Activated CD4-positive, alpha-beta memory T cell treated with anti-CD3 and anti-CD28 coated beads for 36 hours (primary cell): ENCODE measurements at regions of chr9 and their contacts with region 1.

Region 1: DNA sequence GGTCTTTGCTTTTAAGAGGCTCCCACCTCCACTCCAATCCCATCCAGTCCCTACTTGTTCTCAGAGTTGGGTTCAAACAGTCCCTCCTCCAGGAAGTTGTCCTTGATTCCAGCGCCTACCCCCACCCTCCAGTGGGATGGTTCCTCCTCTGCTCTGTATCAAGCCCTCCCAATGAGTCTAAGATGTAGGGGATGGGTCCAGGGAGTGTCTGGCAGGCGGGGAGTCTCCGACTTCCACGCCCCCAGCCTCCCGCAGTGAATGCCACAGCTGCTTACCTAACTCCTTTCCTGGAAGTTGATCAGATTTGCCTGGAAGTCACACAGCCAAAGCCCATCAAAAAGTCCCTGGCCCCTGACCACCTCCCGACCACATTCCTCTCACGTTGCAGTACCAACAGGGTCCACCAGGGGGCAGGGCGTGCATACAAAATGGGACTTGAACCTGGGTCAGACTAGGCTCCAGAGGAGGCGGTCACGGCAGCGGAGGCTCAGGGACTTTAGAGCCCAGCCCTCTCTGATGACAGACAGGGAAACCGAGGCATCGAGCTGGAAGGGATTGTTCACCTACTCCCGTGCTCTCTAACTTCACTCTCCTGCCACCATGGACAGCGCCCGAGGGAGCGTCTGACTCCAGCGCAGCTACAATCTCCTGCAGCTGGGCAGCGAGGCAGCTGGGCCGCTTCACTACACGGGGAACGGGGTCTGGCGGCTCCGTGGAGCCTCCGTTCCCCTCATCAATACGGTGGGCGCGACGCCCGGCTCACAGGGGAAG is 25.0 kb upstream of the TDRD7 start:
- DNase-seq: peak; percentile 87
- H3K4me3 Mint-ChIP-seq: no peak overlapping the region
- H3K27ac Mint-ChIP-seq: no peak overlapping the region
- H3K4me1 Mint-ChIP-seq: peaks cover 16% of the 10 kb centered on the region
- H3K27me3 Mint-ChIP-seq: peaks cover 19% of the 10 kb centered on the region

Region 2: GRCh38 chr9:97348866-97349265 is 38.1 kb before region 1 on chr9:
- CTCF ChIA-PET with region 1: no interaction called
- POLR2A ChIA-PET with region 1: no interaction called
- intact Hi-C with region 1: no loop called
- DNase-seq: no peak
- H3K4me3 Mint-ChIP-seq: no peak overlapping the region
- H3K27ac Mint-ChIP-seq: no peak overlapping the region
- H3K4me1 Mint-ChIP-seq: no peaks in the 10 kb centered on the region
- H3K27me3 Mint-ChIP-seq: no peaks in the 10 kb centered on the region

Region 3: GRCh38 chr9:97367729-97368128 is 19.2 kb before region 1 on chr9:
- CTCF ChIA-PET with region 1: interaction called, 12 read pairs
- POLR2A ChIA-PET with region 1: no interaction called
- intact Hi-C with region 1: no loop called
- DNase-seq: no peak
- H3K4me3 Mint-ChIP-seq: no peak overlapping the region
- H3K27ac Mint-ChIP-seq: no peak overlapping the region
- H3K4me1 Mint-ChIP-seq: peaks cover 3% of the 10 kb centered on the region
- H3K27me3 Mint-ChIP-seq: no peaks in the 10 kb centered on the region

Region 4: DNA sequence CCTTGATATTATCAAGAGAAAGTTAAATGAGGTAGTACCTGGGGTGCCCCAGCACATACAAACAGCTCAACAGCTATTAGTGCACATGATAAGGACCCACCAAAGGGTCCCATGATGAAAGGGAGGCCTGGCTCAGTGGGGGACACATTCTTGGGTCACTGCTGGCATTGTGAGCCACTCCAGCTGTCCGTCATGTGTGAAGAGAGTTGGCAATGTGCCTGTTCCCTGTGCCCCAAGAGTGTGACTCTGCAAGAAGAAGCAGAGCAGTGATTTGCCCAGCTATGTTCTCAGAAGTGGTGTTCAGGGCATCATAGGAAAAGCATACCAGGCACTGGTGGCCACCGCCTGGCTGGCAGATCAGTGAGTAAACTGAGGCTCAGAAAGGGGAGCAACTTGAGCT is 12.1 kb before region 1 on chr9:
- CTCF ChIA-PET with region 1: interaction called, 13 read pairs
- POLR2A ChIA-PET with region 1: no interaction called
- intact Hi-C with region 1: no loop called
- DNase-seq: no peak
- H3K4me3 Mint-ChIP-seq: no peak overlapping the region
- H3K27ac Mint-ChIP-seq: no peak overlapping the region
- H3K4me1 Mint-ChIP-seq: no peaks in the 10 kb centered on the region
- H3K27me3 Mint-ChIP-seq: no peaks in the 10 kb centered on the region

Region 5: GRCh38 chr9:97398999-97399758 is 12.3 kb after region 1 on chr9:
- CTCF ChIA-PET with region 1: interaction called, 45 read pairs
- POLR2A ChIA-PET with region 1: interaction called, 3 read pairs
- intact Hi-C with region 1: loop called (anchors 1 kb)
- DNase-seq: peak; percentile 80
- H3K4me3 Mint-ChIP-seq: no peak overlapping the region
- H3K27ac Mint-ChIP-seq: no peak overlapping the region
- H3K4me1 Mint-ChIP-seq: peaks cover 17% of the 10 kb centered on the region
- H3K27me3 Mint-ChIP-seq: peaks cover 5% of the 10 kb centered on the region

Region 6: DNA sequence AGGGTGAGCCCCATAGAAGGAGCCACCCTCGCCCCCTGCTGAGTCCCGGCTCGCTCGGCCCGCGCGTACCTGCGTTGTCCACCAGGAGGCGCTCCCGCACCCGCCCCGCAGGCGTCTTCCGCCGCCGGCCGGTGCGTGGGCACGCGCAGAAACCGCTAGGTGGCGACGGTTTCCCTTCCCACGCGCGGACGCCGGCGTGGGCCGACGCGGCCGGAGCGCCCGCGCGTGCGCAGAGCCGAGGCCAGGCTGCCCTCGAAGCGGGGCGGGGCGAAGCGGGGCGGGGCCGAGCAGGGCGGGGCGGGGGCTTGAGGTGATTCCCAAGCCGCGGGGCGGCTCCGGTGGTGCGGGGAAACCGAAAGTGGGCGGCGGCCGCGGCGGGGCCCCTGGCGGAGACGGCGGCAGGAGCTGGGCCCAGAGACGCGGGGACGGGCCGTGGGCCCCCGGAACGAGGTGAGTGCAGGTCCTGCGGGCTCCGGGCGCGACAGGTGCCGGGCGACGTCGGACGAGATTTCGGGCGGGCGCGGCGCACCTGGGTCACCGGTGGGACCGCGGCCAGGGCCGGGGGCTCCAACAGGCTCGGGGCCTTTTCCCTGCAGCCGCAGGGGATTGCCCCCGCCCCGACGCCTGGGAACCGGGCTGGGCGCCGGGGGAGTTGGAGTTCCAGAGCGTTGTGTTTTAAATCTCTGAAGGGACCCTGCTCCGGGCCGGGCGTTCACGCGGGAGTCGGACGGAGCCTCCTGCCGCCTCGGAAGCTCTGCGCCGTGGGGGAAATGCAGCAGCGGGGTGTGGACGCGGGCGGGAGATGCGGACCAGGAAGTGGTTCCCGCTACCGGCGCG is 25.1 kb after region 1 on chr9 and contains the start of gene TDRD7:
- CTCF ChIA-PET with region 1: interaction called, 18 read pairs
- POLR2A ChIA-PET with region 1: no interaction called
- intact Hi-C with region 1: no loop called
- DNase-seq: peak; percentile 92
- H3K4me3 Mint-ChIP-seq: peak within 1 kb of the TSS; percentile 82
- H3K27ac Mint-ChIP-seq: peak within 1 kb of the TSS; percentile 61
- H3K4me1 Mint-ChIP-seq: peaks cover 23% of the 10 kb centered on the region
- H3K27me3 Mint-ChIP-seq: peaks cover 11% of the 10 kb centered on the region
- total RNA-seq, gene TDRD7: 12.3 to 12.5 TPM

Region 7: DNA sequence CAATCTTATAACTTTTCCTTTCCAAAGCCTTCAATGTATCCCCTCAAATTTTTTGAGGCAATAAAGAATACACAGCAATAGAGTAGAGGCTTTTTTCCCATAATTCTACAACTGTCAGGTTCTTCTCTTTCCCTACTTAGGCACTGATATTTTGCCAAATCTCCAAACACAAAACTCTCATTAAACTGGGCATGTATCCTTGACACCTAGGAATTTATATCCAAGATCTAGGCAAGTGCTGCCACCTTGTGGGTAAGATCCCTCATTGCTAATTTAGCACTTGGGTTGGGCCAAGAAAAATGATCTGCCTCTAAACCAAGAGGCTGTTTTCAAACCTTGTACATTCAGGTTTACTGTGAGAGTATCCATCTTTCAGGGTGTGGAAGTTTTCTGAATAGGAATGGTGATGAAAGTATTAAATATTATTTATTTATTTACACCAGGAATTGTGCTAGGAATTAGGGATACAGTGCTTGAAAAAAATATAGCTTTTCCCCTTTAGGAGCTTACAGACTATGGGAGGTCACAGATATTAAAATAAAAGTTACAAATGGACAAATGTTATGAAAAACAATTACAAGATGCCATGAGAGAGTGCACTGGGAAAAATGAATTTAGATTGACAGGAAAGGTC is 228.6 kb after region 1 on chr9:
- CTCF ChIA-PET with region 1: interaction called, 28 read pairs
- POLR2A ChIA-PET with region 1: no interaction called
- intact Hi-C with region 1: loop called (anchors 1 kb)
- DNase-seq: peak; percentile 64
- H3K4me3 Mint-ChIP-seq: no peak overlapping the region
- H3K27ac Mint-ChIP-seq: no peak overlapping the region
- H3K4me1 Mint-ChIP-seq: peaks cover 12% of the 10 kb centered on the region
- H3K27me3 Mint-ChIP-seq: no peaks in the 10 kb centered on the region

Region 8: DNA sequence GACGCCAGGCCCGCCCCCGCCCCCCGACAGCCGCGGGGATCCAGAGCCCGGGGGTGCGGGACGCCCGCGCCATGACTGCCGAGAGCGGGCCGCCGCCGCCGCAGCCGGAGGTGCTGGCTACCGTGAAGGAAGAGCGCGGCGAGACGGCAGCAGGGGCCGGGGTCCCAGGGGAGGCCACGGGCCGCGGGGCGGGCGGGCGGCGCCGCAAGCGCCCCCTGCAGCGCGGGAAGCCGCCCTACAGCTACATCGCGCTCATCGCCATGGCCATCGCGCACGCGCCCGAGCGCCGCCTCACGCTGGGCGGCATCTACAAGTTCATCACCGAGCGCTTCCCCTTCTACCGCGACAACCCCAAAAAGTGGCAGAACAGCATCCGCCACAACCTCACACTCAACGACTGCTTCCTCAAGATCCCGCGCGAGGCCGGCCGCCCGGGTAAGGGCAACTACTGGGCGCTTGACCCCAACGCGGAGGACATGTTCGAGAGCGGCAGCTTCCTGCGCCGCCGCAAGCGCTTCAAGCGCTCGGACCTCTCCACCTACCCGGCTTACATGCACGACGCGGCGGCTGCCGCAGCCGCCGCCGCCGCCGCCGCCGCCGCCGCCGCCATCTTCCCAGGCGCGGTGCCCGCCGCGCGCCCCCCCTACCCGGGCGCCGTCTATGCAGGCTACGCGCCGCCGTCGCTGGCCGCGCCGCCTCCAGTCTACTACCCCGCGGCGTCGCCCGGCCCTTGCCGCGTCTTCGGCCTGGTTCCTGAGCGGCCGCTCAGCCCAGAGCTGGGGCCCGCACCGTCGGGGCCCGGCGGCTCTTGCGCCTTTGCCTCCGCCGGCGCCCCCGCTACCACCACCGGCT is 467.2 kb after region 1 on chr9:
- CTCF ChIA-PET with region 1: no interaction called
- POLR2A ChIA-PET with region 1: no interaction called
- intact Hi-C with region 1: no loop called
- DNase-seq: peak; percentile 76
- H3K4me3 Mint-ChIP-seq: peak overlapping the region; percentile 87
- H3K27ac Mint-ChIP-seq: no peak overlapping the region
- H3K4me1 Mint-ChIP-seq: peaks cover 24% of the 10 kb centered on the region
- H3K27me3 Mint-ChIP-seq: peaks cover 74% of the 10 kb centered on the region